AG04450 (cell line): ENCODE measurements at regions of chr3 and their contacts with region 1.

Region 1: DNA sequence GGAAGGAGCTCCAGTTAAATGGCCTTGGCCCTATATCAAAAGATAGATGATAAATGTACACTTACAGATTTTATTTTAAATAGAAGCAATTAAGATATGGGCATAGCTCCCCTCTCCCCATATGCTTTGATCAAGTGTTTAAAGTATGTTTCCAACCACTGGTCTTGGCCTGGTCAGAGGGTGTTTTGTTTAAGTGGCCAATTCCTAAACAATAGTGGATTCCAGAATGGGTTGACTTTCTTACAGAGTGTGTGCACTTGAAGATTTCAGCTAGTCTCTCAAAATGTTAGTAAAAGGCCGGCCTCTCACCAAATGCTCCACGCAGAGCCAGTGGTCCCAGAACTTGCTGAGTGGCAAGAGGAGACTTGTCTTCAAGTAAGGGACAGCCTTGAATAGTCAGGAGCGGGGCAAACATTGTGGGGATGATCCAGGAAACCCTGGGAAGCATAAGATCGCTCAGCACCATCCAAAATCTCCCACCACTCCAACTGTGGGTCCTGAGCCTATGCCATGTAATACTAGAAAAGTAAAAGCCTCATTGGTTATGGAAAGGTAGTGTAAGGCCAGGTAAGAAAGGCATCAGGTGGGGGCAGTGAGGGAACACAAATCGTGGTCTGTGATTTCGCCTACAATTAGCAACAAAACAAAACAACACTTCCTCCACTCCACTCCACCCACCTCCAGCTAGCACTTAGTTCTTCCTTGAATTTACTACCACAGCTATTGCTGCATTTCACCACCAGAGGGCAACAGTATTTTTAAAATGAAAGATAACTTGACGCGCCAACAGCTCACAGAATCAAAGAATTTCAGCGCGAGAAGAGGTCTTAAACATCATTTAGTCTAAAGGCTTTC is 4.8 kb downstream of the RARRES1 start:
- DNase-seq: no peak
- H3K4me3 ChIP-seq: no peak overlapping the region
- H3K27ac ChIP-seq: no peak overlapping the region
- H3K27me3 ChIP-seq: no peaks in the 10 kb centered on the region
- CTCF ChIP-seq: peak; percentile 80

Region 2: GRCh38 chr3:158659454-158660237 is 67.8 kb before region 1 on chr3:
- CTCF ChIA-PET with region 1: interaction called, 69 read pairs
- POLR2A ChIA-PET with region 1: no interaction called
- DNase-seq: peak; percentile 55
- H3K4me3 ChIP-seq: no peak overlapping the region
- H3K27ac ChIP-seq: no peak overlapping the region
- H3K27me3 ChIP-seq: no peaks in the 10 kb centered on the region
- CTCF ChIP-seq: peak; percentile 76

Region 3: GRCh38 chr3:158685159-158685558 is 42.3 kb before region 1 on chr3:
- CTCF ChIA-PET with region 1: interaction called, 18 read pairs
- POLR2A ChIA-PET with region 1: interaction called, 4 read pairs
- DNase-seq: no peak
- H3K4me3 ChIP-seq: no peak overlapping the region
- H3K27ac ChIP-seq: no peak overlapping the region
- H3K27me3 ChIP-seq: no peaks in the 10 kb centered on the region
- CTCF ChIP-seq: no peak

Region 4: DNA sequence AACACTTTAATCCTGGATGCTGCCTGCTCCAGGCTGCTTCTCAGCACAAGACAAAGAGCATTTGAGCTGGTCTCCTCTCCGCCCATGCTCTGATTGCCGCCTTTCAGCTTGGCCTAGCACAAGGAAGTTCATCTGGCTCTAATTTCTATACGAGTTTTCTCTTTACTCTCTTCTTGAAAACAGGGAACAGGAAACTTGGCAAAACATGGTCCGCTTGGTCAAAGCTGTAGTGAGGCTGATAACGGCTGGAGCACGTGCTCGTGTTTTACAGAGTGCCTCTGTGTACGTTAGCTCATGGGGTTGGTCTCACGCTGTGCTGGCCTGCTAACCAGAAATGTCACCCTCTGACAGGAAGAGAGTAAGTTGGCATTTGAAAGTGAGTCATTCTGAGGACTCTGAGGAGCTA is 14.3 kb before region 1 on chr3:
- CTCF ChIA-PET with region 1: interaction called, 23 read pairs
- POLR2A ChIA-PET with region 1: interaction called, 3 read pairs
- DNase-seq: no peak
- H3K4me3 ChIP-seq: no peak overlapping the region
- H3K27ac ChIP-seq: no peak overlapping the region
- H3K27me3 ChIP-seq: no peaks in the 10 kb centered on the region
- CTCF ChIP-seq: no peak

Region 5: GRCh38 chr3:158762701-158763100 is 35.3 kb after region 1 on chr3:
- CTCF ChIA-PET with region 1: interaction called, 13 read pairs
- POLR2A ChIA-PET with region 1: no interaction called
- DNase-seq: no peak
- H3K4me3 ChIP-seq: no peak overlapping the region
- H3K27ac ChIP-seq: no peak overlapping the region
- H3K27me3 ChIP-seq: no peaks in the 10 kb centered on the region
- CTCF ChIP-seq: no peak

Region 6: DNA sequence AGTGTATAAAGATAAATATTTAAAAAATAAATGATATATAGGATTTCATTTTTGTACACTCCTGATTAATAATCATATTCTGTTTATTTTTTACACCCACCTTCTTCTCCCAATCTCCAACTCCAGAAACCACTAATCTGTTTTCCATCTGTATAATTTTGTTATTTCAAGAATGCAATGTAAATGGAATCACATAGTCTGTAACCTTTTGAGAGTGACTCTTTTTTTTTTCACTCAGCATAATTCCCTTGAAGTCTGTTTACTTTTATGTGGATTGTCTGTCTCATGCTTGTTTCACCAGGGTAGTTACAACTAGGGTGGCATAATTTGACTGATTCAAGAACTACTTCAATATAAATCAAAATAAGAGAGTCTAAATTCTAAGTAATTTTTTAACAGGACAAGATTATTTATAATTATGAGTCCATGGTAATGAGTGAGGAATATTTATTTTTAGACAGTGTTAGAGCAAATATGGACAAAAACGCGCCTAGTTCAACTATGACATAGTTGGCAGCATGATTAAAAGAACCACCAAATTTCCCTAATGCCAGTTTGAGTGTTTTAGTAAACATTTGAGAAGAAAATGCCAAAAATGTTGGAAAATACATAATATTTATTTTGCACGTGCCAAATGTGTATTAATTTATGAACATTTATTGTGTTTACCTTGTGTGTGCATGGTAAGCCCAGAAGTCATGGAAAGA is 55.0 kb after region 1 on chr3:
- CTCF ChIA-PET with region 1: interaction called, 16 read pairs
- POLR2A ChIA-PET with region 1: no interaction called
- DNase-seq: no peak
- H3K4me3 ChIP-seq: no peak overlapping the region
- H3K27ac ChIP-seq: no peak overlapping the region
- H3K27me3 ChIP-seq: no peaks in the 10 kb centered on the region
- CTCF ChIP-seq: no peak